GM13976 (cell line): ENCODE measurements at regions of chr12 and their contacts with region 1.

Region 1: GRCh38 chr12:66087365-66087943 is 43.1 kb downstream of the LLPH start:
- DNase-seq: peak; percentile 57
- CTCF ChIP-seq: peak; percentile 46

Region 2: GRCh38 chr12:65306366-65307168 is 780.9 kb before region 1 on chr12:
- in situ Hi-C with region 1: loop called (anchors 25 kb)
- DNase-seq: no peak
- CTCF ChIP-seq: peak; percentile 43

Region 3: GRCh38 chr12:65602610-65603295 is 484.7 kb before region 1 on chr12:
- in situ Hi-C with region 1: loop called (anchors 25 kb)
- DNase-seq: peak; percentile 51
- CTCF ChIP-seq: peak; percentile 65

Region 4: GRCh38 chr12:65765436-65765813 is 322.0 kb before region 1 on chr12:
- in situ Hi-C with region 1: no loop called
- DNase-seq: no peak
- CTCF ChIP-seq: no peak

Region 5: GRCh38 chr12:66321435-66321834 is 234.0 kb after region 1 on chr12:
- in situ Hi-C with region 1: no loop called
- DNase-seq: no peak
- CTCF ChIP-seq: no peak